ENCODE measurements at regions of chr13 and their contacts with region 1.

Region 1: GRCh38 chr13:108005231-108005630 is 210.1 kb downstream of the LIG4 start:
- DNase-seq: no peak
- H3K4me3 ChIP-seq: no peak overlapping the region
- H3K27ac ChIP-seq: no peak overlapping the region
- H3K4me1 ChIP-seq: no peaks in the 10 kb centered on the region
- H3K27me3 ChIP-seq: no peaks in the 10 kb centered on the region
- CTCF ChIP-seq: no peak
- POLR2A ChIP-seq: no peak

Region 2: GRCh38 chr13:108850691-108851090 is 845.5 kb after region 1 on chr13:
- intact Hi-C with region 1: loop called (anchors 5 kb)
- DNase-seq: no peak
- H3K4me3 ChIP-seq: no peak overlapping the region
- H3K27ac ChIP-seq: no peak overlapping the region
- H3K4me1 ChIP-seq: no peaks in the 10 kb centered on the region
- H3K27me3 ChIP-seq: no peaks in the 10 kb centered on the region
- CTCF ChIP-seq: no peak
- POLR2A ChIP-seq: no peak